ENCODE measurements at regions of chr19 and their contacts with region 1.

Region 1: DNA sequence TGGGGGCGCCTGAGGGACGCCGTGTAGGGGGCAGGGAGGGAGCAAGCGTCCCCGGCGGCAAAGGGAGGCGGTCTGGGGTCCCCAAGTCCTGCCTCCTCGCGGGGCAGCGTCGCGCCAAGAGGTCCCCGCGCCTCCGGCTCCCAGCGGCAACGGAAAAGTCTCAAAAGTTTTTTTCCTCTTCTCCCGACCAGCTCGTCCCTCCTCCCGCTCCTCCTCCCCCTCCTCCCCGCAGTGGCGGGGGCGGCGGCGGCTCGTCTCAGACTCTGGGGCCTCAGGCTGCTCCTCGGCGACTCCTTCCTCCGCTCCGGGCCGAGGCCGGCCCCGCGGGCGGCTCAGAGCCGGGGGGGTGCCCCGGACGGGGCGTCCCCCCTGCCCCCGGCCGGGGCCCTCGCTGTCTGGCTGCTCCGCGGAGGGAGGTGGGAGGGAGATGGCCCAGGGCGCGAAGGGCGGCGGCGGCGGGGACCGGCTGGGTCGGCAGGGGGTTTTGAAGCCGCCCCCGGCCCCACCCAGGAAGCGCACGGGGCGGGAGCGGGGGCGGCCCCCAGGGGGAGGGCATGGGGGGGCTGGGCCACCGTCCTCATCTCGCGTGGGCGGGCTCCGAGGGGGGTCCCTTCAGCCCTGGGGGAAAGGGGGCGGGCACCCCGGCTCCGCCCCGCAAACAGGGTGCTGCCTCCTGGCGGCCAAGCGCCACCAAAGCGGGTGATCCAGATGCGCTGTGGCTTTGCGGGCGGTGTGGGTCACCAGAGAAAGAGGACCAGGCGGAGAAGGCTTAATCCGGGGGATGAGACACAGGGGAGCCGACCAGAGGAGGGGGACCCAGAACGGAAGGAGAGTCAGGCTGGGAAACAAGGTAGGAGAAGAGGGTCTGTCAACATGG is at the start of gene TGFB1:
- DNase-seq: peak; percentile 92 to 100
- ATAC-seq: peak; percentile 53 to 71
- H3K4me3 ChIP-seq: peak within 1 kb of the TSS; percentile 72
- H3K27ac ChIP-seq: peak within 1 kb of the TSS; percentile 90 to 92
- H3K4me1 ChIP-seq: peaks cover 15% of the 10 kb centered on the region
- CTCF ChIP-seq: peak; percentile 99
- EP300 ChIP-seq: peak in 1 of 2 experiments; percentile 42; a peak in 1 of 5 replicates
- POLR2A ChIP-seq: peak; percentile 63
- RAD21 ChIP-seq: peak in 1 of 2 experiments; percentile 76; a peak in 4 of 5 replicates
- polyA plus RNA-seq, gene TGFB1: 6.0 and 13.2 TPM in 2 replicates

Region 2: DNA sequence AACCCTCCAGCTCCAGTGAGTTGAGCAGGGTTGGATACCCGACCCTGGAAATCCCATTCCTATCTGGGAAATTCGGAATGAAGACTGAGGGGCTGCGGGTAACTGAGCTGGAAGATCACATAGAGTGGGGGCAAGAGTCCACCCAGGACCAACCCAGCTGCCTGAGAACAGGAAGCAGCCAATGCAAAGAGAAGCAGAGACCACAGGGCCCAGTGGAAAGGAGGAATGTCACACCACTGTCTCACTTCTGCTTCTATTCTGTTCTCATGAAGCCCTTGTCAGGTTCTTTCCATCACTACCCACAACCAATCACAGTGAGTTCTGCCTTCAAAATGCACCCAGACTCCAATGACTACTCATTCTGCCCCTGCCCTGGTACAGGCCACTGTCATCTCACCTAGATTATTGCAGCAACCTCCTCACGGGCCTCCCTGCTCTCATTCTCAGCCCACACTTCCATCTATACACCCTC is 1535.0 kb before region 1 on chr19:
- CTCF ChIA-PET with region 1: no interaction called
- POLR2A ChIA-PET with region 1: no interaction called
- DNase-seq: no peak
- ATAC-seq: no peak
- H3K4me3 ChIP-seq: no peak overlapping the region
- H3K27ac ChIP-seq: no peak overlapping the region
- H3K4me1 ChIP-seq: no peaks in the 10 kb centered on the region
- CTCF ChIP-seq: no peak
- EP300 ChIP-seq: no peak
- POLR2A ChIP-seq: no peak
- RAD21 ChIP-seq: no peak

Region 3: GRCh38 chr19:41298348-41298964 is 55.2 kb before region 1 on chr19:
- CTCF ChIA-PET with region 1: interaction called, 19 read pairs
- POLR2A ChIA-PET with region 1: no interaction called
- DNase-seq: no peak
- ATAC-seq: peak; percentile 28 to 54; a peak in 4 of 6 replicates
- H3K4me3 ChIP-seq: no peak overlapping the region
- H3K27ac ChIP-seq: no peak overlapping the region
- H3K4me1 ChIP-seq: no peaks in the 10 kb centered on the region
- CTCF ChIP-seq: no peak
- EP300 ChIP-seq: no peak
- POLR2A ChIP-seq: no peak
- RAD21 ChIP-seq: no peak

Region 4: GRCh38 chr19:41327576-41328156 is 26.0 kb before region 1 on chr19:
- CTCF ChIA-PET with region 1: interaction called, 295 read pairs
- POLR2A ChIA-PET with region 1: interaction called, 23 read pairs
- DNase-seq: peak in 1 of 2 experiments; percentile 71
- ATAC-seq: peak; percentile 0 to 9; a peak in 3 of 6 replicates
- H3K4me3 ChIP-seq: no peak overlapping the region
- H3K27ac ChIP-seq: peak overlapping the region; percentile 53 to 91
- H3K4me1 ChIP-seq: peaks cover 64% of the 10 kb centered on the region
- CTCF ChIP-seq: no peak
- EP300 ChIP-seq: no peak
- POLR2A ChIP-seq: no peak
- RAD21 ChIP-seq: no peak

Region 5: GRCh38 chr19:41341669-41342490 is 11.8 kb before region 1 on chr19:
- CTCF ChIA-PET with region 1: interaction called, 143 read pairs
- POLR2A ChIA-PET with region 1: interaction called, 4 read pairs
- DNase-seq: no peak
- ATAC-seq: peak; percentile 12 to 27; a peak in 3 of 6 replicates
- H3K4me3 ChIP-seq: no peak overlapping the region
- H3K27ac ChIP-seq: no peak overlapping the region
- H3K4me1 ChIP-seq: peaks cover 9% of the 10 kb centered on the region
- CTCF ChIP-seq: no peak
- EP300 ChIP-seq: no peak
- POLR2A ChIP-seq: no peak
- RAD21 ChIP-seq: peak in 1 of 2 experiments; percentile 8; a peak in 1 of 5 replicates

Region 6: DNA sequence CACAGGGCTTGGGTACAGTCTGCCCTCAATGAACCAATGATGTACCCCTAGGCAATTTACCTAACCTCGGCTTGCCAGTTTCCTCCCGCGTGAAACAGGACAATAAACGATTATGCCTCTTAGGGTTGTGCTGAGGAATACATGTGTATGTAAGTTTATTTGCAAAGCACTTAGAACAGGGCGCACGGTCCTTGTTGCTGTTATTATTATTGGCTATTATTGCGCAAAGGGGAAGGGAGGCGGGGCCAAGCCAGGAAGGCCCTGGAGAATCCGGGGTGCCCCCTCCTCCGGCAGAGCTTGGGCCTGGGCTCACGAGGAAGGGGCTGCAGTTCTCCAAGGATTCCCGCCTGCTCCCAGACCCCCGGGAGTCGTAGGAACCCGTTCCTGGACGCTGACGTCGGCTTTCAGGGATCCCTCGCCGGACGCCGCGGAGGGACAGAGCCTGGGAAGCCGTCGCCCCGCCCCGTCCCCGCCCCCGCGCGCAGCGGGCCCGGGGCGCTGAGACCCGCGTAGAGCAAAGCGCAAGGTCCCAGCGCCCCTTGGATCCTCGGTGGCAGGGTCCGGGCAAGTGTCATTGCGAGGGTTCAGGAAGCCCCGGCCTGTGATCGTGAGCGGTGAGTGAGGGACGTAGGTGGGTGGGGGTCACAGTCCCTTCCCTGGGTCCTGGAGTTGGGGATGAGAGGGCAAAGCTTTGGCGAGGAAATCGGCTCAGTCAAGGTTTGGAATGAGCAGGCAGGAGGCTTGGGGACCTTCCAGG is 22.7 kb after region 1 on chr19 and contains the start of gene TMEM91:
- CTCF ChIA-PET with region 1: interaction called, 197 read pairs
- POLR2A ChIA-PET with region 1: no interaction called
- DNase-seq: no peak
- ATAC-seq: peak; percentile 54 to 60
- H3K4me3 ChIP-seq: peak within 1 kb of the TSS; percentile 44
- H3K27ac ChIP-seq: peak within 1 kb of the TSS; percentile 45 to 74; a peak in 5 of 6 replicates
- H3K4me1 ChIP-seq: peaks cover 18% of the 10 kb centered on the region
- CTCF ChIP-seq: no peak
- EP300 ChIP-seq: no peak
- POLR2A ChIP-seq: peak; percentile 26; the same call in 1 of the 2 replicates
- RAD21 ChIP-seq: no peak
- polyA plus RNA-seq, gene TMEM91: 5.2 and 6.8 TPM in 2 replicates

Region 7: DNA sequence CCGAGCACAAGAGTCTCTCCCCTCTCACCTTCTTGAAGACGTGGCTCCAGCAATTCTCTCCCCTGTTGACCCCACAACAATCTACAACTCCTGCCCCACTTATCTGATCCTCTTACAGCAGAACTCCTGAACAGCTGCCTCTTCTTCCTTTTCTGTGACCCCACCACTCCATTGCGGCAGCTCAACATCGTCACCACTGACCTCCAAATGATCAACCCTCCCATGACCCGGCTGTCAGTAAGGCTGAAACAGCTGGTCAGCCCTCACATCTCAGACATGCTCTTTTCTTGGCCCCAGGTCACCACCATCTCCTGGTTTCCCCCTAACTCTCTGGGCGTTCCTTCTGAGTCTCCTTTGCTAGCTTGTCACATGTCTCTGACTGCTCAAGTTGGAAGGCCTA is 41.7 kb after region 1 on chr19:
- CTCF ChIA-PET with region 1: interaction called, 15 read pairs
- POLR2A ChIA-PET with region 1: no interaction called
- DNase-seq: no peak
- ATAC-seq: no peak
- H3K4me3 ChIP-seq: no peak overlapping the region
- H3K27ac ChIP-seq: no peak overlapping the region
- H3K4me1 ChIP-seq: peaks cover 20% of the 10 kb centered on the region
- CTCF ChIP-seq: no peak
- EP300 ChIP-seq: no peak
- POLR2A ChIP-seq: no peak
- RAD21 ChIP-seq: no peak

Measured in A549 (cell line).